HepG2 (cell line): ENCODE measurements at regions of chr10 and their contacts with region 1.

Region 1: GRCh38 chr10:133357285-133358151 is at the start of gene FUOM:
- DNase-seq: peak; percentile 79
- ATAC-seq: peak; percentile 65
- H3K4me3 ChIP-seq: peak within 1 kb of the TSS; percentile 72 to 90 (median 86)
- H3K27ac ChIP-seq: peak within 1 kb of the TSS; percentile 93
- H3K4me1 ChIP-seq: peaks cover 38% of the 10 kb centered on the region
- H3K27me3 ChIP-seq: no peaks in the 10 kb centered on the region
- CTCF ChIP-seq: peak; percentile 49
- EP300 ChIP-seq: no peak
- POLR2A ChIP-seq: peak in 1 of 2 experiments; percentile 68; a peak in 2 of 4 replicates
- RAD21 ChIP-seq: peak; percentile 9
- total RNA-seq, gene FUOM: 60.4 and 64.2 TPM in 2 replicates

Region 2: DNA sequence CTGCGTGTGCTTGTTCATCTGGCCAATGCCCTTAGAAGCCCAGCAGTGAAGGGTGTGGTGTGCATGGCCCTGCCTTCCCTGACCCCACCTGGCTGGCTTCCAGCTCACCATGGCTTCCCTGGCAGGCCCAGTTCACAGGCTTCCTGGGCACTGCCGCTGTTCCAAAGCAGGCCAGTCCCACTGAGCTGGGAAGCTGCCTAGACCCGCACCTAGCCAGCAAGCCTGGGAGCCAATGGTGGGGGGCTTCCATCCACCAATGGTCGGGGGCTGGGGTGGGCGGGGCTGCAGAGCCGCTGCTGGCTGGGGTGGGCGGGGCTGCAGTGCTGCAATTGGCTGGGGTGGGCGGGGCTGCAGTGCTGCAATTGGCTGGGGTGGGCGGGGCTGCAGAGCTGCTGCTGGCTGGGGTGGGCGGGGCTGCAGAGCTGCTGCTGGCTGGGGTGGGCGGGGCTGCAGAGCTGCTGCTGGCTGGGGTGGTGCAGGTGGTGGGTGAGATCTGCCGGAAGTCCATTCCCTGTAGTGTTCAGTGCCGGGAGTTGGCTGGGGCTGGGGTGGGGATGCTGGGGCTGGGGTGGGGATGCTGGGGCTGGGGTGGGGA is 33.2 kb before region 1 on chr10:
- CTCF ChIA-PET with region 1: no interaction called
- POLR2A ChIA-PET with region 1: interaction called, 16 read pairs
- in situ Hi-C with region 1: no loop called
- intact Hi-C with region 1: no loop called
- DNase-seq: peak; percentile 62
- ATAC-seq: peak; percentile 79
- H3K4me3 ChIP-seq: peak overlapping the region; percentile 52 to 74 (median 61); a peak in 5 of 6 replicates
- H3K27ac ChIP-seq: no peak overlapping the region
- H3K4me1 ChIP-seq: peaks cover 28% of the 10 kb centered on the region
- H3K27me3 ChIP-seq: peaks cover 4 to 47% of the 10 kb centered on the region in 2 experiments
- CTCF ChIP-seq: no peak
- EP300 ChIP-seq: no peak
- POLR2A ChIP-seq: no peak
- RAD21 ChIP-seq: no peak

Region 3: GRCh38 chr10:133368153-133368552 is 10.6 kb after region 1 on chr10:
- CTCF ChIA-PET with region 1: no interaction called
- POLR2A ChIA-PET with region 1: interaction called, 55 read pairs
- in situ Hi-C with region 1: no loop called
- intact Hi-C with region 1: loop called (anchors 2 kb)
- DNase-seq: no peak
- ATAC-seq: no peak
- H3K4me3 ChIP-seq: no peak overlapping the region
- H3K27ac ChIP-seq: no peak overlapping the region
- H3K4me1 ChIP-seq: peaks cover 12% of the 10 kb centered on the region
- H3K27me3 ChIP-seq: no peaks in the 10 kb centered on the region
- CTCF ChIP-seq: no peak
- EP300 ChIP-seq: no peak
- POLR2A ChIP-seq: no peak
- RAD21 ChIP-seq: no peak

Region 4: GRCh38 chr10:133373104-133373624 is 15.6 kb after region 1 on chr10 and contains the start of gene ECHS1:
- CTCF ChIA-PET with region 1: no interaction called
- POLR2A ChIA-PET with region 1: interaction called, 78 read pairs
- in situ Hi-C with region 1: no loop called
- intact Hi-C with region 1: loop called (anchors 2 kb)
- DNase-seq: peak; percentile 84
- ATAC-seq: peak; percentile 96
- H3K4me3 ChIP-seq: peak within 1 kb of the TSS; percentile 65 to 100 (median 91); a peak in 5 of 6 replicates
- H3K27ac ChIP-seq: peak within 1 kb of the TSS; percentile 66
- H3K4me1 ChIP-seq: peaks cover 35% of the 10 kb centered on the region
- H3K27me3 ChIP-seq: peaks cover 0 to 3% of the 10 kb centered on the region in 2 experiments; a peak in 1 of 5 replicates
- CTCF ChIP-seq: no peak
- EP300 ChIP-seq: no peak
- POLR2A ChIP-seq: peak in 1 of 2 experiments; percentile 86; a peak in 2 of 4 replicates
- RAD21 ChIP-seq: peak; percentile 49; the same call in 1 of the 2 replicates
- total RNA-seq, gene ECHS1: 195 and 233 TPM in 2 replicates

Region 5: DNA sequence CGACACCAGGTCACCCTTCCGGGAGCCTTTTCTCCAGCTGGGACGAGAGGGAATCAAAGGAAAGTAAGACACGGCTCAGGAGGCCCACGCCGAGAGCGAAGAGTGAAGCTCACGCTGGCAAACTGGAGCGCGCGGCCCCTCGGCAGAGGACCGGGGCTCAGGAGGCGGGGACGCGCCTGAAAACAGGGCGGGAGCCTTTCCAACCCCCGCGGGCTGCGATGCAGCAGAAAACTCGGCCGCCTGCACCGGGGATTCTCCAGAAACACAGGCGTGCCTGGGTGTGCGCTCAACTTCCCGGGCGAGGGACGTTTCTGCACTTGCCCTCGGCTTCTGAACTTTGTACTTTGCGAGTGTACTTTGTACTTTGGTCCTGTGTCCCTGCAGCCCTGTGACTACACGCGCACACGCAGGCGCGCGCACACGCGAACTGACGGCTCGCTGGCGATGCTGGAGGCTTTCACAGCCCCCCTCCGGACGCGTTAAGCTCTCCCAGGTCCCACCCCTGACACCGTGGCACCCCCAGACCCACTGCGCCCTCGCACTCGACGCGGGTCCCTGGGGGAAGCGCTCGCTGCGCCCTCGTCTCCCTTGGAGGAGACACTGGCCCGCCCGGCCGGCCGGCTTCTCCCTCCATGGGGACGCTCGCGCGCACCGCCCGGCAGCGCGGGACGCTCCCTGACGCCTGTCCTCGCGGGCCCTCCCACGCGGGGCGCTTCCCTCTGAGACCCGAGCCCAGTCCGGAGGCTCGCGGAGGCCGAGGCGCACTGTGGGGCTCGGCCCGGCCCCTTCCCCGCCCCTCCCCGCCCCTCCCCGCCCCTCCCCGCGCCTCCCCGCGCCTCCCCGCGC is 21.0 kb after region 1 on chr10:
- CTCF ChIA-PET with region 1: no interaction called
- POLR2A ChIA-PET with region 1: interaction called, 78 read pairs
- in situ Hi-C with region 1: no loop called
- intact Hi-C with region 1: loop called (anchors 2 kb)
- DNase-seq: peak; percentile 46
- ATAC-seq: peak; percentile 69
- H3K4me3 ChIP-seq: peak overlapping the region; percentile 56 to 86 (median 72)
- H3K27ac ChIP-seq: peak overlapping the region; percentile 82
- H3K4me1 ChIP-seq: peaks cover 25% of the 10 kb centered on the region
- H3K27me3 ChIP-seq: peaks cover 0 to 3% of the 10 kb centered on the region in 2 experiments; a peak in 1 of 5 replicates
- CTCF ChIP-seq: no peak
- EP300 ChIP-seq: peak in 1 of 2 experiments; percentile 52; a peak in 2 of 4 replicates
- POLR2A ChIP-seq: peak in 1 of 2 experiments; percentile 43; a peak in 1 of 4 replicates
- RAD21 ChIP-seq: no peak

Region 6: GRCh38 chr10:133394064-133394663 is 36.6 kb after region 1 on chr10 and contains the start of gene MTG1:
- CTCF ChIA-PET with region 1: no interaction called
- POLR2A ChIA-PET with region 1: interaction called, 16 read pairs
- in situ Hi-C with region 1: no loop called
- intact Hi-C with region 1: no loop called
- DNase-seq: peak; percentile 87
- ATAC-seq: peak; percentile 98
- H3K4me3 ChIP-seq: peak within 1 kb of the TSS; percentile 69 to 84 (median 79)
- H3K27ac ChIP-seq: peak within 1 kb of the TSS; percentile 82
- H3K4me1 ChIP-seq: peaks cover 19% of the 10 kb centered on the region
- H3K27me3 ChIP-seq: no peaks in the 10 kb centered on the region; a peak in 1 of 5 replicates
- CTCF ChIP-seq: peak; percentile 66
- EP300 ChIP-seq: 0 out of 4 replicates have a peak, but pooled peaks of 1 of the 2 experiments have one; percentile 4
- POLR2A ChIP-seq: peak; percentile 91 to 94
- RAD21 ChIP-seq: peak; percentile 73; the same call in 1 of the 2 replicates
- total RNA-seq, gene MTG1: 29.9 and 42.0 TPM in 2 replicates